RWPE1 (cell line): ENCODE measurements at regions of chr3 and their contacts with region 1.

Region 1: DNA sequence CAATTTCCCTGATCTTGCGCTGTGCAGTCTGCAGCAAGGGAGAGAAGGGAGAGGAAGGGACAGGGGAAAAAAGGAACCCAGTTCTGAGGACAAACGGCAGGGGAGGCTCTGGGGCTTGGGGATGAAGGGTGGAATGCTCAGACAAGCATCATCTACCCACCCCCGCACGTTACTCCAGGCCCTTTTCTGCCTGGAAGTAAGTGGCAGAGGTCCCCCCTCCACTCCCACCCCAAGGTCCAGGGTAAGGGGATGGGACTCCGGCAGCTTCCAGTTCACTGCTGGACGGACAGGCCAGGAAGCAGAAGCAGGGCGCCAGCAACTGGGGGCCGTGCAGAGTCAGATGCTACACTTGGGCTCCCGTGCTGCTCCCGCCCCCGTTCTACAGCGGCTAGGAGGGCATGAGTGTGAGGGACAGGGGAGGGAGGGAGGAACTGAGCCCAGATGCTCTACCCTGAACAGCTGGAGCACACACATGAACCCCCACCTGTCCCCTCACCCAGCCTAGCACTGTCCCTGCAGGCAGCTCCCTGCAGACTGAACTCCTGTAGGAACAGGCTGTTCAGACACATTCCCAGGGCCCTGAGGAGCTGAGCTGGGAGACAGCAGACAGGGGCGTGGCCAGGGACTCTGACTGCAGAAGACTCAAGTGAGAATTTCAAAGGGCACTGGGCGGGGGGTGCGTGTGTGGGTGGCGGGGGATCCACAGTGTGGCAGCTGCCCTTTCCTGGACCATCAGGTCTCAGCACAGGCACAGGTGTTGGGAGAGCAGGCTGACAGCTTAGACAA is 59.7 kb downstream of the SENP2 start:
- DNase-seq: no peak
- H3K27ac ChIP-seq: peak overlapping the region; percentile 34
- CTCF ChIP-seq: no peak

Region 2: GRCh38 chr3:185781759-185782158 is 136.0 kb after region 1 on chr3:
- CTCF ChIA-PET with region 1: no interaction called
- POLR2A ChIA-PET with region 1: no interaction called
- DNase-seq: peak; percentile 58
- H3K27ac ChIP-seq: no peak overlapping the region
- CTCF ChIP-seq: no peak

Region 3: GRCh38 chr3:185865247-185865646 is 219.5 kb after region 1 on chr3:
- CTCF ChIA-PET with region 1: interaction called, 10 read pairs
- POLR2A ChIA-PET with region 1: no interaction called
- DNase-seq: no peak
- H3K27ac ChIP-seq: no peak overlapping the region
- CTCF ChIP-seq: no peak